ENCODE measurements at regions of chr11 and their contacts with region 1.

Region 1: DNA sequence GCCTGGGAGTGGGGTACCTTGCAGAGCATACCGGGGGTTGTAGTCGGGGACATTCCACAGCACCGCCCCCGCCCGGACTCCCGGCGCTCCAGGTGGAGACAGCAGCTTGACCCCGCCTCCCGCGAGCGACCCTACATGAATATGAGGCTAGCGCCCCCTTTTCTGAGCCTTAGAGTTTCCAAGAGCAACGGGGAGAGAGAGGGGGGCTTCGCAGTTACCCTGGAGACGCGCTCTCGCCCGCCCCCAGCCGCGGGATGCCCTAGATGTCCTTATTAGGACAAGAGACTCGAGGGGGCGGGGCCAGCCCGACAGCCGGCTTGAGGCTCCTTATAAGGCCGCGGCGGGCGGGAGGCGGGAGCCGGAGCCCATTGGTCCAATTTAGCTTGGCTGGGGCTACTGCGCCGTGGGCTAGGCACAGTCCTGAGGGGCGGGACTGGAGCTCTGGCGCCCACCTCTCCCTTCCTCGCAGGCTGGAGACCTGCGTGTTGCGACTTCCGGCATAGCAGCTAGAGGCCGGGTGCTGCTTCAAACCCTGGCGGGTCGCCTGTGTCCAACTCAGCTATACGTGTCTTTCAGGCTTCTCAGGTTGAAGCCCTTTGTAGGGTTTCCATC is 927 bp upstream of the MUS81 start:
- DNase-seq: peak; percentile 87

Region 2: GRCh38 chr11:65720237-65720934 is 138.9 kb before region 1 on chr11 and contains the start of gene RNASEH2C:
- CTCF ChIA-PET with region 1: no interaction called
- POLR2A ChIA-PET with region 1: interaction called, 23 read pairs
- DNase-seq: peak; percentile 85

Region 3: DNA sequence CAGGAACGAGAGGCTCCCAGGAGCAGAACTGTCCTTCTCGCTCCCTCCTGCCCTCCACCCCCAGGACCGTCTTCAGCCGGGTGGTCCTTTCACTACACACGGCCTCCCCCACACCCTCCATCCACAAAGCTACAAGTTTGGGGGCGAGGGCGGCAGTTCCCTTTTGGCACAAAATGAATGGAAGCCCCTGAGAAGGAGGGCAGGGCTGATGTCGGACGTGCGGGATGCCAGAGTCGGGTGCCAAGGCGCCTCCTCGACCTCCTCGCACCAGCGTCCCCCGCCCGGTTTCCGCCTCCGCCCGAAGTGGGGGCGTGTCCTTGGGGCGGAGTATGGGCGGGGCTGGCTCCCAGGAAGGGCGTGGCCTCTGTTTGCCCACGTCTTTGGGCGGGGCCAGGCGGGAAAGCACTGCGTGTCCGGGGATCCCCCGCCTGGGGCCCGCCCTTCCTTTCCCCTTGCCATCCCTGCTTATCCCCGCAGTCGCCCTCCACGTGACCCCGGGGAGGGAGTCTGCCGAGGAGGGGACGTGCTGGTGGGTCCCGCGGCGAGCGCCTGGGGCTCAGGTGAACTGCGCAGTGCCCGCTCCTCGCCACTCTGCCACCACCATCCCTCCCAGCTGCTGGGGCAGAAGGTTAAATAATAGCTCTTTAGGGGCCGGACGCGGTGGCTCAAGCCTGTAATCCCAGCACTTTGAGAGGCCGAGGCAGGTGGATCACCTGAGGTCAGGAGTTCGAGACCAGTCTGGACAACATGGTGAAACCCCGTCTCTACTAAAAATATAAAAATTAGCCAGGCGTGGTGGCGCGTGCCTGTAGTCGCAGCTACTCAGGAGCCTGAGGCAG is 14.2 kb after region 1 on chr11:
- CTCF ChIA-PET with region 1: interaction called, 11 read pairs
- POLR2A ChIA-PET with region 1: interaction called, 97 read pairs
- DNase-seq: peak; percentile 95

Region 4: GRCh38 chr11:65879617-65880016 is 20.3 kb after region 1 on chr11 and contains the start of gene CTSW:
- CTCF ChIA-PET with region 1: interaction called, 14 read pairs
- POLR2A ChIA-PET with region 1: interaction called, 289 read pairs
- DNase-seq: no peak

Region 5: GRCh38 chr11:65918211-65919145 is 59.2 kb after region 1 on chr11 and contains the start of gene C11orf68:
- CTCF ChIA-PET with region 1: no interaction called
- POLR2A ChIA-PET with region 1: interaction called, 10 read pairs
- DNase-seq: peak; percentile 38

Region 6: GRCh38 chr11:66051766-66052663 is 192.7 kb after region 1 on chr11 and contains the start of gene SF3B2:
- CTCF ChIA-PET with region 1: no interaction called
- POLR2A ChIA-PET with region 1: interaction called, 14 read pairs
- DNase-seq: peak; percentile 96

Measured in HEK293T (cell line).